ENCODE measurements at regions of chr18 and their contacts with region 1.

Region 1: GRCh38 chr18:42053188-42053781 is 98.3 kb downstream of the PIK3C3 start:
- DNase-seq: peak; percentile 87
- H3K4me3 Mint-ChIP-seq: no peak overlapping the region
- H3K27ac Mint-ChIP-seq: no peak overlapping the region
- H3K4me1 Mint-ChIP-seq: peaks cover 2% of the 10 kb centered on the region
- H3K27me3 Mint-ChIP-seq: no peaks in the 10 kb centered on the region

Region 2: DNA sequence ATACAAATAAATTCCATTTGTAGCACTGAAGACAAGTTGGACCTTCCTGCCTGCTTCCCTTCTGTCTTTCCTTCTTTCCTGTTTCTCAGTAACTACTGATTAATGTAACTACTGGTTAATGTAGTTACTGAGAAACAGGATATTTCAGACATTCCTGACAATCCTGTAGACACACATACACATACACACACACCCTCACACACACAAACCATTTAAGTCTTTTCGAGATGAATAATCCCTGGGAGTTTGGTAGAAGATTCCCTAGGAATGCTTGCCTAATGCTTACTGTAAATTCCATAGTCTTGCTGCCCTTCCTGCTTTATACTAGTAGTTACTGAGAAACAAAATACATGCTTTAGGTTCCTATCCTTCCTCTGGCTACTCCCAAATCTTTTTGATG is 14.3 kb before region 1 on chr18:
- intact Hi-C with region 1: no loop called
- DNase-seq: no peak
- H3K4me3 Mint-ChIP-seq: no peak overlapping the region
- H3K27ac Mint-ChIP-seq: no peak overlapping the region
- H3K4me1 Mint-ChIP-seq: peaks cover 2% of the 10 kb centered on the region
- H3K27me3 Mint-ChIP-seq: no peaks in the 10 kb centered on the region

Region 3: DNA sequence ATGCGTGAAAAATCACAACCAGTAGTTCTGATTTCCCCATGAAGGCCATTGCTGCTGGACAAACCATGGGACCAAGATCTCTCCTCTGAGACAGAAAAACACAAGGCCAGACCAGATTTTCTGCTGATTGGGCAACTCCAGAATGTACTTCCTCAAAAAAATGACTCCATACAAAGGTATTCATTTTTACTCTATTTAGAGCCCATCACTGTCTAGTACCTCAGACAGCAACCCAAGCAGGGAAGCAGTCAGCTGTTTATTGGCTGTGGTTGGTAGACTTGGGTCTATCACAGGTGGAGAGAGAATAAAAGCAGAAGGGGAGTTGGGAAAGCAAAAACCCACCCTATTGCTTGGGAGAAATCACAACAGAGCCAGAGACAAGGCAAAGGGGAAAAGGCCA is 121.6 kb after region 1 on chr18:
- intact Hi-C with region 1: no loop called
- DNase-seq: no peak
- H3K4me3 Mint-ChIP-seq: no peak overlapping the region
- H3K27ac Mint-ChIP-seq: no peak overlapping the region
- H3K4me1 Mint-ChIP-seq: no peaks in the 10 kb centered on the region
- H3K27me3 Mint-ChIP-seq: peaks cover 5% of the 10 kb centered on the region

Region 4: DNA sequence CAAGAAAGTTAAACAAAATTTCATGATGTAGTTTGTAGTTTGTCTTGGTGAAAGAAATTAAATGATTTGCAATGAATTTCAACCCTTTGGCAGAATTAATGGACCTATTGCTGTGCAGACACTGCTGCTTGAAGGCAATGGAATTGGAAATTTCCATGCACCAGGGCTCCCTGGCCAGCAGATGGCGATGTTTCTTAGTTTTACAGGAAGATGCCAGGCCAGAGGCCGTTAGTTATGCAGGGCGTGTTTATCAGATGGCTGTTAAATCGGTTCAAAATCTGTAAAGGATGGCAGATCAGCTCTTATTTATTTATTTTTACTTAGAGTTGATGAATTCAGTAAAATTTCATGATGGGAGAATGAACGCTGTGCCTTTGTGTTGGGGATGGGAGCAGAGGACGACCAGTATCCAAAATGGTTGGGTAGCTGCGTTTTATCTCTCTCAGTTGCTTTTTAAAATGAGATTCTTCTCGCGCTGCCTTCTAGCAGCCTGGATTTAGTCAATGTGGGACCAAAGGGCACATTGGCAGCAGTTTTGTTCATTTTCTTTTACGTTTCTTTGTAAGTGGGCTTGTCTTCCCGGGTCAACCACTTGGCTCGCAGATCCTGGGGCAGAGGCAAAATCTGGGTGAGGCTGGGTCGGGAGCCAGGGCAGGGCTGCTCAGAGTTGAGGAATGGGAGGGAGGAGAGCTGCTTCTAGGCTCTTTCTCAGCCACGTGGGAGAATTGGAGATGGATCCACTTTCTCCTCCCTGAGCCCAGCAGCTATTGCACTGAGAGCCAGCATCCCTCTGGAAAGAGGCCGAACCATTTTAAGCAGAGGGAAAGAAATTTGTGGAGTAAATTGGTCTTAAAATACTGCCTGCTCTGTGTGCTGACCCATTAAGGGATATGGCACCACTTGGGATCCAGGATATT is 245.7 kb after region 1 on chr18:
- intact Hi-C with region 1: loop called (anchors 1 kb)
- DNase-seq: peak; percentile 86
- H3K4me3 Mint-ChIP-seq: no peak overlapping the region
- H3K27ac Mint-ChIP-seq: no peak overlapping the region
- H3K4me1 Mint-ChIP-seq: no peaks in the 10 kb centered on the region
- H3K27me3 Mint-ChIP-seq: no peaks in the 10 kb centered on the region

Region 5: DNA sequence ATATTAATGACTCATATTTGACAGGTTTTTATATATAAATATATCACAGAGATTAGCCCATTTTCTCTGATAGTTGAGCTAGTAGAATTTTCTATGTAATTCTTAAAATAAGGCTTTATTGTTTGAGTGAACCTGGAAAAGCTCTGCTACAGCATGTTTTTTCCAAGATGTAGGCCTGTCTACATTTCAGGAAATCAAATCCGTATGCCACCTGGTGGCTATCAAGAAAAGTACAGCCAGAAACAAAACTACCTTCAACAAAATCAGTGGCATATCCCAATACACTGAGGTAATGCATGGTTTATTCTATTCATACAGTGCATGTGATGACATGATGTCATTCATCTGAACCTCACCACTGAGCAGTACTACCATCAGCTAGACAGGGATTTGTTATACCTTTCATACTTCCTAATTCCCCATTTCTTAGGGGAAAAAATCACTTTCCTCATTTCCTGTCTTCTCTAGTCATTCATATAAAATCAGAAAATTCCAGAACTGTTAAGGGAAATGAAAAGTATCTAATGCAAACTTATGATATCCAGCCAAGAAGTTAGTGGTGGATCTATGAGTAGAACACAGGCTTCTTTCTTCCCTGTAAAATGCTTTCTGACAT is 1534.4 kb after region 1 on chr18:
- intact Hi-C with region 1: loop called (anchors 5 kb)
- DNase-seq: no peak
- H3K4me3 Mint-ChIP-seq: no peak overlapping the region
- H3K27ac Mint-ChIP-seq: no peak overlapping the region
- H3K4me1 Mint-ChIP-seq: no peaks in the 10 kb centered on the region
- H3K27me3 Mint-ChIP-seq: no peaks in the 10 kb centered on the region

Measured in activated CD4-positive, alpha-beta T cell treated with anti-CD3 and anti-CD28 coated beads, Interleukin-2, amount 10 ng/mL, durations not matched to agents 24 days and 14 days (primary cell).